CD8-positive, alpha-beta T cell (primary cell): ENCODE measurements at regions of chr16 and their contacts with region 1.

Region 1: GRCh38 chr16:50548125-50548908 is at the start of gene NKD1:
- DNase-seq: peak; percentile 44 to 85 (median 73)
- ATAC-seq: peak; percentile 68
- H3K4me3 ChIP-seq: peak within 1 kb of the TSS; percentile 71 to 76
- H3K4me3 Mint-ChIP-seq: peak within 1 kb of the TSS; percentile 88
- H3K27ac ChIP-seq: peak within 1 kb of the TSS; percentile 39 to 60
- H3K27ac Mint-ChIP-seq: peak within 1 kb of the TSS; percentile 92
- H3K4me1 ChIP-seq: peaks cover 32% of the 10 kb centered on the region
- H3K4me1 Mint-ChIP-seq: peaks cover 31% of the 10 kb centered on the region
- H3K27me3 ChIP-seq: no peaks in the 10 kb centered on the region
- H3K27me3 Mint-ChIP-seq: no peaks in the 10 kb centered on the region
- CTCF ChIP-seq: no peak
- total RNA-seq, gene NKD1: 6.0 to 7.5 TPM

Region 2: GRCh38 chr16:49463529-49463928 is 1084.8 kb before region 1 on chr16:
- CTCF ChIA-PET with region 1: no interaction called
- POLR2A ChIA-PET with region 1: no interaction called
- intact Hi-C with region 1: loop called in 1 of 2 experiments (anchors 10 kb)
- DNase-seq: peak; percentile 55 to 90 (median 75)
- ATAC-seq: peak; percentile 83
- H3K4me3 ChIP-seq: peak overlapping the region in 1 of 2 experiments; percentile 10
- H3K4me3 Mint-ChIP-seq: peak overlapping the region; percentile 32
- H3K27ac ChIP-seq: peak overlapping the region; percentile 34 to 44
- H3K27ac Mint-ChIP-seq: peak overlapping the region; percentile 94
- H3K4me1 ChIP-seq: peaks cover 52% of the 10 kb centered on the region
- H3K4me1 Mint-ChIP-seq: peaks cover 51% of the 10 kb centered on the region
- H3K27me3 ChIP-seq: no peaks in the 10 kb centered on the region
- H3K27me3 Mint-ChIP-seq: no peaks in the 10 kb centered on the region
- CTCF ChIP-seq: no peak

Region 3: GRCh38 chr16:50103764-50104163 is 444.6 kb before region 1 on chr16:
- CTCF ChIA-PET with region 1: no interaction called
- POLR2A ChIA-PET with region 1: no interaction called
- intact Hi-C with region 1: no loop called
- DNase-seq: no peak
- ATAC-seq: no peak
- H3K4me3 ChIP-seq: no peak overlapping the region
- H3K4me3 Mint-ChIP-seq: no peak overlapping the region
- H3K27ac ChIP-seq: no peak overlapping the region
- H3K27ac Mint-ChIP-seq: no peak overlapping the region
- H3K4me1 ChIP-seq: no peaks in the 10 kb centered on the region
- H3K4me1 Mint-ChIP-seq: no peaks in the 10 kb centered on the region
- H3K27me3 ChIP-seq: no peaks in the 10 kb centered on the region
- H3K27me3 Mint-ChIP-seq: no peaks in the 10 kb centered on the region
- CTCF ChIP-seq: no peak

Region 4: DNA sequence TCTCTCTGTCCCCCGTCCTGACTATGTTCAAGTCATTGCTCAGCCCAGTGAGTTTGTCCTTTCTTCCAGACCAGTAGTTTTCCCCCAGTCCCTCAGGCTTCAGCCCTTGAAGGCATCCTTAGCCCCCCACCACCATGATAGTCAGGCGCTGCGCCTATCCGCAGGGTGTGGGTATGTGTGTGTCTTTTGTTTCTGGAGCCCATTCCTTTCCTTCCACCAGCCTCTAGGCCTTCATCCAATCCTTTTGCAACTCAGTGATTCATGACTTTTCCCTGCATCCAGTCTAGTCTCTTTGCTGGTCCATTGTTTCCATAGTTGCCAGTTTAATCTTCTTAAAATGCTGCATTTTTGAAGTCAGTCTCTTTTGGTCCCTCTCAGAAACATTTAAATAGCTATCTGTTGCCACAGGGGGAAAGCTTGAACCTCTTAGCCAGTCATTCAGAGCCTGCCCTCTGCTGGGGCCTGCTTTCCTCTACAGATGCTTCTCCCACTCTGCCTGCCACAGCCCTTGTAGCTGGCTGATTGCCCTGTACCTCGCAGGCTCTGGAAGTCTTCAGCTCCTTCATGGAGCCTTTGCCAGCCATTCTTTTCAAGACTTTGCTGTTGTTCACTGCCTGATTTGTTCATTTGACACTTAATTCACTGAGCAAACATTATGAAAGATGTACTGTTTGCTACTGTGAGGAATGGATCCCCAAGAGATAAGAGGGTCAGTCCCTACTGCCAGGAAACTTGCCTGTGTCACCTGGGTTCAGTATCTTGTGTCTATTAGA is 337.9 kb before region 1 on chr16:
- CTCF ChIA-PET with region 1: no interaction called
- POLR2A ChIA-PET with region 1: no interaction called
- intact Hi-C with region 1: loop called in 1 of 2 experiments (anchors 2 kb)
- DNase-seq: peak; percentile 34 to 76 (median 60)
- ATAC-seq: peak; percentile 90
- H3K4me3 ChIP-seq: no peak overlapping the region
- H3K4me3 Mint-ChIP-seq: no peak overlapping the region
- H3K27ac ChIP-seq: no peak overlapping the region
- H3K27ac Mint-ChIP-seq: peak overlapping the region; percentile 72
- H3K4me1 ChIP-seq: peaks cover 3% of the 10 kb centered on the region
- H3K4me1 Mint-ChIP-seq: peaks cover 39% of the 10 kb centered on the region
- H3K27me3 ChIP-seq: no peaks in the 10 kb centered on the region
- H3K27me3 Mint-ChIP-seq: no peaks in the 10 kb centered on the region
- CTCF ChIP-seq: peak; percentile 61

Region 5: DNA sequence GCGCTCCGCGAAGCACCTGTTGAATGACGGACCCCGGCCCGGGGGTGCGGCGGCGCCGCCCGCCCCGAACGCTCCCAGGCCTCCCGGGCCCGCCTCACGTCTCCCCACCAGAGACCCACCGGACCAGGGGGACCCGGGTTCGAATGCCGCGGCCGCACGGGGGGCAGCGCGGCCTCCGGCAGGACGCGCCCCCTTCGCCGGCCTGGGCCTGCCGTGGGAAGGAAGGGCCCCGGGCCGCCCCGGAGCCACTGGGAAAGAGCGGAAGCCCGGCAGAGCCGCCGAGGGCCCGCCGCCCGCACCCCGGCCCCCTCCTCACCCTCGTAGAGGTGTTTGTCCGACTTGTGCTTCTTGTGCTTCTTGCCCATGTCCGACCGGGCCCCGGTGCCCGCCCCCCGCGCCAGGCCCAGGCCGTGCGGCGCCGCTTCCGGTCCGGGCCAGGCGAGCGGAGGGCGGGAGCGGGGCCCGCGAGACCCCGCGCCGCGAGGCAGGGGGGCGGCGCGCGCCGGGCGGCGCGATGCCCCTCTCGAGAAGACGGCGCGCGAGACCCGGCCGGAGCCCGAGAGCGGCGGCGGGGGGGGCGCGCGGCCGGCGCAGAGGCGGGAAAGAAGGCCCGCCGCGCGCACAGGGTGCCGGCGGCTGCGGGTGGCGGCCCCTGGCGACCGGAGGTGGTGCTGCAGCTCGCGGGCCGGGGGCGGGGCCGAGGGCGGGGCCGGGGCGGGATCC is 179.7 kb before region 1 on chr16 and contains the start of gene BRD7:
- CTCF ChIA-PET with region 1: interaction called, 3 read pairs
- POLR2A ChIA-PET with region 1: no interaction called
- intact Hi-C with region 1: loop called (anchors 1 to 2 kb)
- DNase-seq: peak; percentile 60 to 88 (median 71)
- ATAC-seq: peak; percentile 94
- H3K4me3 ChIP-seq: peak within 1 kb of the TSS; percentile 54 to 60
- H3K4me3 Mint-ChIP-seq: peak within 1 kb of the TSS; percentile 85
- H3K27ac ChIP-seq: peak within 1 kb of the TSS; percentile 56 to 79
- H3K27ac Mint-ChIP-seq: peak within 1 kb of the TSS; percentile 95
- H3K4me1 ChIP-seq: peaks cover 41% of the 10 kb centered on the region
- H3K4me1 Mint-ChIP-seq: peaks cover 52% of the 10 kb centered on the region
- H3K27me3 ChIP-seq: no peaks in the 10 kb centered on the region
- H3K27me3 Mint-ChIP-seq: no peaks in the 10 kb centered on the region
- CTCF ChIP-seq: no peak
- total RNA-seq, gene BRD7: 113 to 117 TPM

Region 6: GRCh38 chr16:50627419-50627818 is 79.1 kb after region 1 on chr16:
- CTCF ChIA-PET with region 1: no interaction called
- POLR2A ChIA-PET with region 1: no interaction called
- intact Hi-C with region 1: loop called in 1 of 2 experiments (anchors 1 kb)
- DNase-seq: peak in 8 of 9 experiments; percentile 24 to 71 (median 60)
- ATAC-seq: peak; percentile 85
- H3K4me3 ChIP-seq: no peak overlapping the region
- H3K4me3 Mint-ChIP-seq: peak overlapping the region; percentile 73
- H3K27ac ChIP-seq: no peak overlapping the region
- H3K27ac Mint-ChIP-seq: peak overlapping the region; percentile 45
- H3K4me1 ChIP-seq: peaks cover 40% of the 10 kb centered on the region
- H3K4me1 Mint-ChIP-seq: peaks cover 42% of the 10 kb centered on the region
- H3K27me3 ChIP-seq: no peaks in the 10 kb centered on the region
- H3K27me3 Mint-ChIP-seq: no peaks in the 10 kb centered on the region
- CTCF ChIP-seq: peak; percentile 37

Region 7: GRCh38 chr16:50741808-50742575 is 193.7 kb after region 1 on chr16 and contains the start of gene CYLD:
- CTCF ChIA-PET with region 1: no interaction called
- POLR2A ChIA-PET with region 1: no interaction called
- intact Hi-C with region 1: loop called (anchors 1 kb)
- DNase-seq: peak; percentile 97 to 100 (median 99)
- ATAC-seq: peak; percentile 88
- H3K4me3 ChIP-seq: peak within 1 kb of the TSS; percentile 91 to 93
- H3K4me3 Mint-ChIP-seq: peak within 1 kb of the TSS; percentile 98
- H3K27ac ChIP-seq: peak within 1 kb of the TSS; percentile 95 to 99
- H3K27ac Mint-ChIP-seq: peak within 1 kb of the TSS; percentile 99
- H3K4me1 ChIP-seq: peaks cover 36% of the 10 kb centered on the region
- H3K4me1 Mint-ChIP-seq: peaks cover 45% of the 10 kb centered on the region
- H3K27me3 ChIP-seq: no peaks in the 10 kb centered on the region
- H3K27me3 Mint-ChIP-seq: no peaks in the 10 kb centered on the region
- CTCF ChIP-seq: no peak
- total RNA-seq, gene CYLD: 341 TPM